ENCODE measurements at regions of chr3 and their contacts with region 1.

Region 1: GRCh38 chr3:127574880-127575878 is 15.4 kb downstream of the TPRA1 start:
- DNase-seq: peak; percentile 70 to 91 (median 83)
- ATAC-seq: peak; percentile 98
- H3K4me3 ChIP-seq: no peak overlapping the region
- H3K4me3 Mint-ChIP-seq: peak overlapping the region; percentile 22
- H3K27ac ChIP-seq: peak overlapping the region in 1 of 2 experiments; percentile 43
- H3K27ac Mint-ChIP-seq: peak overlapping the region; percentile 84
- H3K4me1 ChIP-seq: peaks cover 9% of the 10 kb centered on the region
- H3K4me1 Mint-ChIP-seq: peaks cover 13% of the 10 kb centered on the region
- H3K27me3 ChIP-seq: no peaks in the 10 kb centered on the region
- H3K27me3 Mint-ChIP-seq: no peaks in the 10 kb centered on the region
- CTCF ChIP-seq: peak; percentile 90

Region 2: DNA sequence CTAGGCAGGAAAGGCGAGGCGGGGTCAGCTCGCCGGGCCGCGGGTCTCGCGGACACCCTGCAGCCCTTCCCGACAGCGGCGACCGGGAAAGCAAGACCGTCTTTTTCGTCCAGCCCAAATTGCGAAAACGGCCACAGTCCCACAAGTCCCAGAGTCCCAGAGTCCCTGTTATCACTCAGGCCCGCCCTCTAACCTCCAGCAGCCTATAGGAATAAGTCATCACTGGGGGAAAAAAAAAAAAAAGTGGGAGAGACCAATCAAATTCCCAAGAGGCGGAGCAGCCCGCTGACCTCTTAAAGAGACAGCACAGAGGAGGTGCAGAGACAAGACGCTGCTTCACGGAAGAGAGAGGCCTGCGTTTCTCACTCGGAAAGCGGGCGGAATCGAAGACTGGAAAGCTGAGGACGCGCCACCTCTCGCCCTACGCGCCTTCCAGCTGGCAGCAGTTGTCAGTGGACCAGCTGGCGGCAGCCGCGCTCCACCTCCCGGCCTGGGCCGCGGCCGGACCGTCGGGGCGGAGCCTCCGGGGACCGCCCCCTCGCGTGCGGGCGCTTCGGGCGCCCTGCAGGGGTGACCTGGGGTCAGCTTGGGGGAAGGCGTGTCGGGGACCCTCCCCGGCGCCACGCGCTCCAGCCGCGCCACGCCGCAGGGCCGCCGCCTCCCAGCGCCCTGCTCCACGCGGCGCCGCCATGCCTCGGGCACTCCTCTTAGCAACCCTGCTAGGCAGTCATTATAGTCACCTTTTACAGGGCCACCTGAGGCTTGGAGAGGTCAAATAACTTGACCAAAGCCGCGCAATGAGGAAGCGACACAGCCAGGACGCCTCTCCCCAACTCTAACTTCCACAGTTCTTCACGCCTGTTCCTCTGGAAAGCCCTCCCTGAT is 15.7 kb after region 1 on chr3 and contains the start of gene TPRA1:
- CTCF ChIA-PET with region 1: interaction called, 33 read pairs
- POLR2A ChIA-PET with region 1: interaction called, 4 read pairs
- intact Hi-C with region 1: loop called in 1 of 2 experiments (anchors 1 kb)
- DNase-seq: peak; percentile 46 to 94 (median 79)
- ATAC-seq: peak; percentile 86
- H3K4me3 ChIP-seq: peak within 1 kb of the TSS; percentile 75 to 81
- H3K4me3 Mint-ChIP-seq: peak within 1 kb of the TSS; percentile 97
- H3K27ac ChIP-seq: peak within 1 kb of the TSS; percentile 68 to 74
- H3K27ac Mint-ChIP-seq: peak within 1 kb of the TSS; percentile 91
- H3K4me1 ChIP-seq: peaks cover 20% of the 10 kb centered on the region
- H3K4me1 Mint-ChIP-seq: peaks cover 35% of the 10 kb centered on the region
- H3K27me3 ChIP-seq: no peaks in the 10 kb centered on the region
- H3K27me3 Mint-ChIP-seq: no peaks in the 10 kb centered on the region
- CTCF ChIP-seq: no peak
- total RNA-seq, gene TPRA1: 6.0 to 6.1 TPM

Region 3: DNA sequence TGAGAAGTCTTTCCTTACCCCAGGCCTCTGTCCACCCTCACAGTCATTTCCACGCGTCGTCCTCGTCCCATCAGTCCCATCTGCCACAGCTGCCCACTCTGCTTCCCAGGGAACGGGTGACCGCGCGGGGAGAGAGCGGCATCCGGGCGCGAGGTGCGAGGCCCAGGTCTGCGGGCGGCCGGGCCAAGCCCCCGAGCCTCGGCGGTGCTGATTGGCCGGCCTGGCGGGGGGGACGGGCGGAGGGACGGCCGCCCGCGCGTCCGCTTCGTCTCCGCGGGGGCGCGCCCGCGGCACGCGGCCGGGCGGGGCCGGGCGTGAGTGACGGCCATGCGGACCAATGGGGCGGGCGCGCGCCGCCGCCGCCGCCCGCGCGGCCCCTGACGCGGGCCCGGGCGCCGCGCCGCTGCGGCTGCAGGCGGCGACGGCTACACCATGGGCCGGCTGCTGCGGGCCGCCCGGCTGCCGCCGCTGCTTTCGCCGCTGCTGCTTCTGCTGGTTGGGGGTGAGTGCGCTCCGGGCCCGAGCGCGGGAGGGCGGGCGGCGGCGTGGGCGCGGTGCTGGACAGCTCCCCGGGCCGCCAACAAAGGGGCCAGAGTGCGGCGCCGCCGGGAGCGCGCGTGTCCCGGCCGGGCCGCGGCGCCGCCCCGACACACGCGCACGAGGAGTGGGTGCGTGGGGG is 53.7 kb after region 1 on chr3 and contains the start of gene PODXL2:
- CTCF ChIA-PET with region 1: interaction called, 14 read pairs
- POLR2A ChIA-PET with region 1: no interaction called
- intact Hi-C with region 1: loop called in 1 of 2 experiments (anchors 2 kb)
- DNase-seq: peak in 7 of 9 experiments; percentile 5 to 70 (median 27)
- ATAC-seq: peak; percentile 27
- H3K4me3 ChIP-seq: peak within 1 kb of the TSS; percentile 40 to 54
- H3K4me3 Mint-ChIP-seq: peak within 1 kb of the TSS; percentile 89
- H3K27ac ChIP-seq: no peak within 1 kb of the TSS
- H3K27ac Mint-ChIP-seq: peak within 1 kb of the TSS; percentile 83
- H3K4me1 ChIP-seq: peaks cover 14% of the 10 kb centered on the region
- H3K4me1 Mint-ChIP-seq: peaks cover 40% of the 10 kb centered on the region
- H3K27me3 ChIP-seq: peaks cover 2 to 9% of the 10 kb centered on the region in 2 experiments
- H3K27me3 Mint-ChIP-seq: peaks cover 37% of the 10 kb centered on the region
- CTCF ChIP-seq: no peak
- total RNA-seq, gene PODXL2: 2.7 to 3.2 TPM

Region 4: GRCh38 chr3:127831723-127832172 is 256.6 kb after region 1 on chr3:
- CTCF ChIA-PET with region 1: interaction called, 3 read pairs
- POLR2A ChIA-PET with region 1: no interaction called
- intact Hi-C with region 1: loop called in 1 of 2 experiments (anchors 2 kb)
- DNase-seq: peak in 5 of 9 experiments; percentile 25 to 54 (median 35)
- ATAC-seq: no peak
- H3K4me3 ChIP-seq: no peak overlapping the region
- H3K4me3 Mint-ChIP-seq: no peak overlapping the region
- H3K27ac ChIP-seq: no peak overlapping the region
- H3K27ac Mint-ChIP-seq: no peak overlapping the region
- H3K4me1 ChIP-seq: no peaks in the 10 kb centered on the region
- H3K4me1 Mint-ChIP-seq: no peaks in the 10 kb centered on the region
- H3K27me3 ChIP-seq: no peaks in the 10 kb centered on the region
- H3K27me3 Mint-ChIP-seq: peaks cover 5% of the 10 kb centered on the region
- CTCF ChIP-seq: peak; percentile 29

Region 5: DNA sequence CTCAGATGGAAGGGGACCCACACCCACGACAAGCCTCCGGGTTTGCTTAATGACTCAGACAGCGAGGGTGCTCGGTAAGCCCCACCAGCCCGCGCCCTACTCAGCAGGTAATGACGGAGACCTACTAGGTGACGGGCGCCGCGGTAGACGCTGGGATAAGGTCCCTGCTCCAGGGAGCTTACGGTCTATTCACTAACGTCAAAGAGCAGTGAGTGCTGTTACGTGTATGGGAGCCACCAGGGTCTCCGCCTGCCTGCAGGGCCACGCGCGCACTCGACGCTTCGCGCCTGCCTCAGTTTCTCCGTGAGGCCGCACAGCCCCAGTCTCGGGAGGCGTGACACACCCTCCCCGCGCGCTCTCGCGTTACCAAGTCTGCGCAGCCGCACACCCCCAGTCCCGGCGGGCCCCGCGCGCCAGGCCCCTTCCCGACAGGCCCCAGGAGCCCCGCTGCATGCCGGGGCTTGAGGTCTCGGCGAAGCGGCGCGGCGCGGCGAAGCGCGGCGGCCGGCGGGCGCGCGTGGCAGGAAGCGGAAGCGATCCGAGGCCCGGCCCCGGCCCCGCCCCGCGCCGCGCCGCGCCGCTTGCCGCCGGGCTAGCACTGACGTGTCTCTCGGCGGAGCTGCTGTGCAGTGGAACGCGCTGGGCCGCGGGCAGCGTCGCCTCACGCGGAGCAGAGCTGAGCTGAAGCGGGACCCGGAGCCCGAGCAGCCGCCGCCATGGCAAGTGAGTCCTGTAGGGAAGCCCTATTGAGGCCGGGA is 476.8 kb after region 1 on chr3 and contains the start of gene SEC61A1:
- CTCF ChIA-PET with region 1: no interaction called
- POLR2A ChIA-PET with region 1: no interaction called
- intact Hi-C with region 1: loop called in 1 of 2 experiments (anchors 2 kb)
- DNase-seq: peak; percentile 87 to 97 (median 95)
- ATAC-seq: peak; percentile 93
- H3K4me3 ChIP-seq: peak within 1 kb of the TSS; percentile 92 to 95
- H3K4me3 Mint-ChIP-seq: peak within 1 kb of the TSS; percentile 99
- H3K27ac ChIP-seq: peak within 1 kb of the TSS; percentile 78 to 85
- H3K27ac Mint-ChIP-seq: peak within 1 kb of the TSS; percentile 98
- H3K4me1 ChIP-seq: peaks cover 35% of the 10 kb centered on the region
- H3K4me1 Mint-ChIP-seq: peaks cover 43% of the 10 kb centered on the region
- H3K27me3 ChIP-seq: no peaks in the 10 kb centered on the region
- H3K27me3 Mint-ChIP-seq: no peaks in the 10 kb centered on the region
- CTCF ChIP-seq: no peak
- total RNA-seq, gene SEC61A1: 125 to 131 TPM

Region 6: DNA sequence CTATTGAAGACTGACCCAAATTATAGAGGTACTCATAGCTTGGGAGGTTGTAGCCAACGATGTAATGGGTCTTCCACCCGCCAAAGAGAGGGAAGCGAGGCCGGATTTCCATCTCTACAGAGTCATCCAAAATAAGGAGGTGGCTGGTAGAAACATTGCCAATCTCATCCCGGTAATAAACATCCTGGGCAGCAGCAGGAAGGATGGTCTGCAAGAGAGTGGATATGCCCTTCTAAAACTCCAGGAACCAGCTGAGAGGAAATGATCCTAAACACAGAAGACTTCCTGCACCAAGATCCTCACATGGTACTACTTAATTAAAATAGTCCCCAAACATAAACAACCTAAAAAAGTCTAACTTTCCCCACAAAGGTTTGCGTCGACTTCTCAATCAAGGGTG is 1054.8 kb after region 1 on chr3:
- CTCF ChIA-PET with region 1: no interaction called
- POLR2A ChIA-PET with region 1: no interaction called
- intact Hi-C with region 1: no loop called
- DNase-seq: no peak
- ATAC-seq: no peak
- H3K4me3 ChIP-seq: no peak overlapping the region
- H3K4me3 Mint-ChIP-seq: no peak overlapping the region
- H3K27ac ChIP-seq: no peak overlapping the region
- H3K27ac Mint-ChIP-seq: no peak overlapping the region
- H3K4me1 ChIP-seq: no peaks in the 10 kb centered on the region
- H3K4me1 Mint-ChIP-seq: peaks cover 11% of the 10 kb centered on the region
- H3K27me3 ChIP-seq: no peaks in the 10 kb centered on the region
- H3K27me3 Mint-ChIP-seq: no peaks in the 10 kb centered on the region
- CTCF ChIP-seq: no peak